ENCODE measurements at regions of chr9 and their contacts with region 1.

Region 1: GRCh38 chr9:124754289-124754688 is 16.8 kb downstream of the NR6A1 start:
- DNase-seq: peak; percentile 32
- ATAC-seq: peak; percentile 78
- H3K4me3 ChIP-seq: no peak overlapping the region
- H3K27ac ChIP-seq: no peak overlapping the region
- H3K4me1 ChIP-seq: 0 out of 2 replicates have a peak, but pooled peaks cover 2% of the 10 kb centered on the region
- H3K27me3 ChIP-seq: no peaks in the 10 kb centered on the region
- CTCF ChIP-seq: peak; percentile 64

Region 2: GRCh38 chr9:124617471-124618141 is 136.7 kb before region 1 on chr9:
- CTCF ChIA-PET with region 1: interaction called, 4 read pairs
- POLR2A ChIA-PET with region 1: no interaction called
- intact Hi-C with region 1: loop called (anchors 2 kb)
- DNase-seq: peak; percentile 78
- ATAC-seq: peak; percentile 96
- H3K4me3 ChIP-seq: no peak overlapping the region
- H3K27ac ChIP-seq: no peak overlapping the region
- H3K4me1 ChIP-seq: peaks cover 11% of the 10 kb centered on the region
- H3K27me3 ChIP-seq: no peaks in the 10 kb centered on the region
- CTCF ChIP-seq: peak; percentile 88